HepG2 (cell line): ENCODE measurements at regions of chr10 and their contacts with region 1.

Region 1: DNA sequence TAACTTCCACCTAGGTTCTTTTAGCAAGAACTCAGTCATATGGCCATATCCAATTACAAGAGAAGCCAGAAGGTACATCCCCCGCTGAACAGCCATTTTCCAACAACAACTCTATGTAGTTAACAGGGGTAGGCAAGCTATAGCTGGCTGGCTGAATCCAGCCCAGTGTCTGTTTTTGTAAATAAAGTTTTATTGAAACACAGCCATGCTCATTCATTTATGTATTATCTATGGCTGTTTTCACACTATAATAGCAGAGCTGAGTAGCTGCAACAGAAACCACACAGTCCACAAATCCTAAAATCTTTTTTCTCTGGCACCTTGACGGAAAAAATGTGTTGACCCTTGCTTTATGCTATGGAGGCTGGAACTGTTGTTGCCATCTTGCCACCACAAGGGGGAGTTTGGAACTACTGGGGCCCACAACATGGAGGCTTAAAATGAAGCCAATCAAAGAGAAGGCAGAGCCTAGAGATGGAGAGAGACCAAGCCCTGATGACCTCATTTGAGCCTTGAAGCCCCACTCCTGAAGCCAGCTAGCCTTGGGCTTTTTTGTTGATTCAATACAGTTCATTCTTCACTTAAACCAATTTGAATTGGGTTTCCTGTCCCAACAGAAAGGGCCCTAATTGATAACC is 33.3 kb upstream of the XPNPEP1 start:
- DNase-seq: peak; percentile 68
- ATAC-seq: peak; percentile 96
- H3K4me3 ChIP-seq: no peak overlapping the region
- H3K27ac ChIP-seq: no peak overlapping the region
- H3K4me1 ChIP-seq: 0 out of 2 replicates have a peak, but pooled peaks cover 10% of the 10 kb centered on the region
- H3K27me3 ChIP-seq: no peaks in the 10 kb centered on the region
- CTCF ChIP-seq: peak; percentile 73
- EP300 ChIP-seq: no peak
- POLR2A ChIP-seq: no peak
- RAD21 ChIP-seq: peak; percentile 61; the same call in 1 of the 2 replicates

Region 2: DNA sequence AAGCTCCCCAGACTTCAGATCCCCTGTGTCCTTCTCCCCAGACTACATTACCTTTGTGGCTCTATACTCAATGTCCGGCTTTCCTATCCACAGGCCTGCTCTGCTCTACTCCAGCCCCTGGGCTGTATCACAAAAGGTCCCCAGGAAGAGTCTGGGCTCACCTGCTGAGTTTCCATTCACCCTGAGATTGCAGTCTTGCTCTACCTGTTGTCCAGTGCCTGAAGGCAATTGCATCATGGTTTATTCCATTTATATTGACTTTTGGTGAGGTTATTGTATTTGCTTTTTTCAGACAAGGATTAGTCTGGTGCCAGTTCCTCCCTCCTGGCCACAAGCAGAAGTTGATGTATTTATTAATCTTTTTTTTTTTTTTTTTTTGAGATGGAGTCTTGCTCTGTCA is 306.4 kb before region 1 on chr10:
- CTCF ChIA-PET with region 1: no interaction called
- POLR2A ChIA-PET with region 1: no interaction called
- in situ Hi-C with region 1: no loop called
- intact Hi-C with region 1: loop called (anchors 5 kb)
- DNase-seq: no peak
- ATAC-seq: no peak
- H3K4me3 ChIP-seq: no peak overlapping the region
- H3K27ac ChIP-seq: no peak overlapping the region
- H3K4me1 ChIP-seq: no peaks in the 10 kb centered on the region
- H3K27me3 ChIP-seq: no peaks in the 10 kb centered on the region
- CTCF ChIP-seq: no peak
- EP300 ChIP-seq: no peak
- POLR2A ChIP-seq: no peak
- RAD21 ChIP-seq: no peak

Region 3: GRCh38 chr10:109698086-109698485 is 258.5 kb before region 1 on chr10:
- CTCF ChIA-PET with region 1: no interaction called
- POLR2A ChIA-PET with region 1: no interaction called
- in situ Hi-C with region 1: no loop called
- intact Hi-C with region 1: no loop called
- DNase-seq: no peak
- ATAC-seq: no peak
- H3K4me3 ChIP-seq: no peak overlapping the region
- H3K27ac ChIP-seq: no peak overlapping the region
- H3K4me1 ChIP-seq: no peaks in the 10 kb centered on the region
- H3K27me3 ChIP-seq: no peaks in the 10 kb centered on the region
- CTCF ChIP-seq: no peak
- EP300 ChIP-seq: no peak
- POLR2A ChIP-seq: no peak
- RAD21 ChIP-seq: no peak

Region 4: GRCh38 chr10:109883859-109884771 is 72.5 kb before region 1 on chr10:
- CTCF ChIA-PET with region 1: interaction called, 3 read pairs
- POLR2A ChIA-PET with region 1: no interaction called
- in situ Hi-C with region 1: no loop called
- intact Hi-C with region 1: loop called (anchors 2 kb)
- DNase-seq: peak; percentile 81
- ATAC-seq: peak; percentile 93
- H3K4me3 ChIP-seq: no peak overlapping the region
- H3K27ac ChIP-seq: no peak overlapping the region
- H3K4me1 ChIP-seq: peaks cover 7% of the 10 kb centered on the region; the same call in 1 of the 2 replicates
- H3K27me3 ChIP-seq: no peaks in the 10 kb centered on the region
- CTCF ChIP-seq: peak; percentile 93
- EP300 ChIP-seq: no peak
- POLR2A ChIP-seq: no peak
- RAD21 ChIP-seq: peak; percentile 95

Region 5: GRCh38 chr10:109939315-109939961 is 17.1 kb before region 1 on chr10:
- CTCF ChIA-PET with region 1: no interaction called
- POLR2A ChIA-PET with region 1: no interaction called
- in situ Hi-C with region 1: no loop called
- intact Hi-C with region 1: no loop called
- DNase-seq: no peak
- ATAC-seq: no peak
- H3K4me3 ChIP-seq: no peak overlapping the region
- H3K27ac ChIP-seq: no peak overlapping the region
- H3K4me1 ChIP-seq: peaks cover 19% of the 10 kb centered on the region
- H3K27me3 ChIP-seq: peaks cover 0 to 3% of the 10 kb centered on the region in 2 experiments; a peak in 1 of 5 replicates
- CTCF ChIP-seq: no peak
- EP300 ChIP-seq: no peak
- POLR2A ChIP-seq: no peak
- RAD21 ChIP-seq: no peak

Region 6: GRCh38 chr10:110016039-110016438 is 59.5 kb after region 1 on chr10:
- CTCF ChIA-PET with region 1: interaction called, 15 read pairs
- POLR2A ChIA-PET with region 1: no interaction called
- in situ Hi-C with region 1: no loop called
- intact Hi-C with region 1: loop called (anchors 1 kb)
- DNase-seq: peak; percentile 44
- ATAC-seq: peak; percentile 83
- H3K4me3 ChIP-seq: no peak overlapping the region
- H3K27ac ChIP-seq: no peak overlapping the region
- H3K4me1 ChIP-seq: peaks cover 33% of the 10 kb centered on the region
- H3K27me3 ChIP-seq: no peaks in the 10 kb centered on the region
- CTCF ChIP-seq: peak; percentile 72
- EP300 ChIP-seq: no peak
- POLR2A ChIP-seq: no peak
- RAD21 ChIP-seq: 0 out of 2 replicates have a peak, but pooled peaks have one; percentile 28

Region 7: DNA sequence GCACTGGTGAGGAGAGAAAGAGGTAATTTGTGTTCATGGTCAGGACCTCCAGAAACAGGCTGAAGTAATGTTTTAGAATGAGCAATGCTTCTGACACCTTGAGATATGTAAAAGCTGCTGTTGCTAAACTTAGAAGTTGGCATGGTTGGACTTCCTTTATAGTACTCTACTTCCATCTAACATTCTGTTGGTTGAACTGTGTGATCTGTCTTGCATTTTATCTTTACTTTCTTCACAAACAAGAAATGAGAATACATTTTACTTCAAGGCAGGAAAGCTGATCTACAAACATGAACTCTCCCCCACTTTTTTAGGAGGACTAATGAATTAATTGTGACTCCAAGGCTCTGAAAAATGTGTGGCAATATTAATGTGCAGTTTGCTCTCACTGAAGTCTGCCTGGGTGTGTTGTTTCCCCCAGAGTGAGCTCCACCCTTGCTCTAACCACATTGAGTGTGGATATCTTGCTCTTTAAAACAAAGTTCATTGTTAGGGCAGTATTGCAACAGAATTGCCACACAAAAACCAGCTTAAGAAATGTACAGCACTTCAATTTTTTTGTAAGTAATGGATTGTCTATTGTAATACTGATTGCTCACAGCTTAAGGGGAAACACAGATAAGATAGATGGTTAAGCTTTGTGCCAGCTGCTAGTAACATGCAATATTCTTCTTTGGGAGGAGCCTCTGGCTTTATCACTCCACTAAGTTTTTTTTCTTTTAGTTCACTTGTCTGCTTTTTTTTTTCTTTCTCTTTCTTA is 120.2 kb after region 1 on chr10:
- CTCF ChIA-PET with region 1: no interaction called
- POLR2A ChIA-PET with region 1: no interaction called
- in situ Hi-C with region 1: no loop called
- intact Hi-C with region 1: loop called (anchors 1 kb)
- DNase-seq: peak; percentile 93
- ATAC-seq: peak; percentile 90
- H3K4me3 ChIP-seq: peak overlapping the region; percentile 7 to 52 (median 36); a peak in 3 of 6 replicates
- H3K27ac ChIP-seq: peak overlapping the region; percentile 55
- H3K4me1 ChIP-seq: peaks cover 67% of the 10 kb centered on the region
- H3K27me3 ChIP-seq: no peaks in the 10 kb centered on the region
- CTCF ChIP-seq: no peak
- EP300 ChIP-seq: peak; percentile 63 to 79; a peak in 2 of 4 replicates
- POLR2A ChIP-seq: no peak
- RAD21 ChIP-seq: no peak